CD4-positive, alpha-beta T cell (primary cell): ENCODE measurements at regions of chr19 and their contacts with region 1.

Region 1: GRCh38 chr19:3762501-3763459 is at the start of gene MRPL54:
- DNase-seq: peak; percentile 98 to 100 (median 99)
- ATAC-seq: peak; percentile 81
- H3K4me3 ChIP-seq: peak within 1 kb of the TSS; percentile 99
- H3K4me3 Mint-ChIP-seq: peak within 1 kb of the TSS; percentile 97
- H3K27ac ChIP-seq: peak within 1 kb of the TSS; percentile 99 to 100
- H3K27ac Mint-ChIP-seq: peak within 1 kb of the TSS; percentile 100
- H3K4me1 ChIP-seq: peaks cover 70% of the 10 kb centered on the region
- H3K4me1 Mint-ChIP-seq: peaks cover 33% of the 10 kb centered on the region
- H3K27me3 ChIP-seq: no peaks in the 10 kb centered on the region
- H3K27me3 Mint-ChIP-seq: no peaks in the 10 kb centered on the region
- CTCF ChIP-seq: no peak
- total RNA-seq, gene MRPL54: 68.9 to 71.1 TPM

Region 2: DNA sequence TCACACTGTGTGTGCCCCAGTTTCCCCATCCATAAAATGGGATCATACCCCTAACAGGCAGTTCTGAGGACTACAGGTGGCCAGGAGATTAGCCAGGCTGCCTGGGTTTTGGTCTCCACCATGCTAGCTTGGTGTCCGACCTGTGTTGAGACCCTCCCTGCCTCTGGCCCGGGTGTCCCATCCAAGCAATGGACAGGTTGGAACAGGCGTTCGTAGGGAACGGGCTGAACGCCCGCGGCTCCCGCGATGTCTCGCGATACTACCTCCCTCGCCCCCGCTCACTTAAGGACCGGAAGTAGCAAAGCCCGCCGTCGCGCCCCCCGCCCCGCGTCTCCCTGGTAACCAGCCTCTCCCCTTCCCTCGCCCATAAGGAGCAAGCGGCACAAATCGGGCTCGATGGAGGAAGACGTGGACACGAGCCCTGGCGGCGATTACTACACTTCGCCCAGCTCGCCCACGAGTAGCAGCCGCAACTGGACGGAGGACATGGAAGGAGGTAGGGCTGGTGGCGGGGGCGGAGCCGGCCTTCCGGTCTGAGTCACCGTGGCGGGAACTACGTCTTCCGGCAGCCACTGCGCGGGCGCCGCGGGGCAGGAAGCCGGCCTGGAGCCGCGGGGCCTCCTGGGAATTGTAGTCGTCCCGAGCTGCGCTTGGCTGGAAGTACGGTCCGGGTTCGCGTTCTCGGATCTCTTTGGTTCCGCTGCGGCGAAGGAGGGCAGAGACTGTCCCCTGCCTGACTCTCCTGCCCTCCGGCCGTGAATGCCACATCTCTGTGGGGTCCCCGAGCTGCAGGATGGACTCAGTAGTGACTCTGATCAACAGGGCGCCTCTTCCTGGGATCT is 327.8 kb before region 1 on chr19:
- CTCF ChIA-PET with region 1: no interaction called
- POLR2A ChIA-PET with region 1: interaction called, 4 read pairs
- intact Hi-C with region 1: loop called in 1 of 2 experiments (anchors 10 kb)
- DNase-seq: peak; percentile 88 to 97 (median 94)
- ATAC-seq: peak; percentile 94
- H3K4me3 ChIP-seq: peak overlapping the region; percentile 79
- H3K4me3 Mint-ChIP-seq: peak overlapping the region; percentile 97
- H3K27ac ChIP-seq: peak overlapping the region; percentile 92 to 94
- H3K27ac Mint-ChIP-seq: peak overlapping the region; percentile 95
- H3K4me1 ChIP-seq: peaks cover 17% of the 10 kb centered on the region
- H3K4me1 Mint-ChIP-seq: peaks cover 17% of the 10 kb centered on the region
- H3K27me3 ChIP-seq: no peaks in the 10 kb centered on the region
- H3K27me3 Mint-ChIP-seq: no peaks in the 10 kb centered on the region
- CTCF ChIP-seq: no peak

Region 3: GRCh38 chr19:3687774-3688706 is 74.7 kb before region 1 on chr19:
- CTCF ChIA-PET with region 1: interaction called, 3 read pairs
- POLR2A ChIA-PET with region 1: interaction called, 43 read pairs
- intact Hi-C with region 1: no loop called
- DNase-seq: peak in 12 of 14 experiments; percentile 18 to 69 (median 54)
- ATAC-seq: peak; percentile 71
- H3K4me3 ChIP-seq: peak overlapping the region; percentile 53
- H3K4me3 Mint-ChIP-seq: peak overlapping the region; percentile 94
- H3K27ac ChIP-seq: peak overlapping the region; percentile 58 to 73
- H3K27ac Mint-ChIP-seq: peak overlapping the region; percentile 91
- H3K4me1 ChIP-seq: peaks cover 34% of the 10 kb centered on the region
- H3K4me1 Mint-ChIP-seq: peaks cover 60% of the 10 kb centered on the region
- H3K27me3 ChIP-seq: no peaks in the 10 kb centered on the region
- H3K27me3 Mint-ChIP-seq: no peaks in the 10 kb centered on the region
- CTCF ChIP-seq: no peak

Region 4: DNA sequence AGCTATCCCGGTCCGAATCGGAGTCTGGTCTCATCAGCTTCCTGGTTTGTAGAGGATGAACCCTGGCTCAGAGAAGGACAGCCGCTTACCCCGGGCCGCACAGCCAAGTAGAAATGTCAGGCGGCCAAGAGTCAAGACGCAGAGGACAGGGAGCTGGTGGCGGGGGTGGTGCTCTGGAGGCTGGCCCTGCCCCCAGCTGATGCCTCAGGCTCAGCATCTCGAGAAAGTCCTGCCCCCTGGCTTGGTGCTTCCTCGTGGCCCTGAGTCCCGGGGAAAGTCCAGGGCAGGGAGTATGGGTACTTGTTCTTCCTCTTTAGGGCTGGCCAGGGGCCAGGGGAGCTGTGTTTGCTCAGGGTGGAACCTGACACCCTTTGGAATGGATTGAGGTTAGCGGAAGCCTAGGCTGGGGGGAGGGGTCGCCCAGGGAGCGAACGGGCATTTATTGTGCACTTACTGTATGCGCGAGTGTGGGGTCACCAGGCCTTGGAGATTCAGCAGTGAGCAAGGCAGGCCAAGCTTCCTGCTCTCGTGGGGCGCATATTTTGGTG is 52.4 kb before region 1 on chr19:
- CTCF ChIA-PET with region 1: no interaction called
- POLR2A ChIA-PET with region 1: no interaction called
- intact Hi-C with region 1: no loop called
- DNase-seq: peak in 2 of 14 experiments; percentile 67 to 77
- ATAC-seq: no peak
- H3K4me3 ChIP-seq: no peak overlapping the region
- H3K4me3 Mint-ChIP-seq: no peak overlapping the region
- H3K27ac ChIP-seq: no peak overlapping the region
- H3K27ac Mint-ChIP-seq: no peak overlapping the region
- H3K4me1 ChIP-seq: peaks cover 8% of the 10 kb centered on the region
- H3K4me1 Mint-ChIP-seq: peaks cover 6% of the 10 kb centered on the region
- H3K27me3 ChIP-seq: peaks cover 0 to 10% of the 10 kb centered on the region in 2 experiments
- H3K27me3 Mint-ChIP-seq: peaks cover 7% of the 10 kb centered on the region
- CTCF ChIP-seq: no peak

Region 5: DNA sequence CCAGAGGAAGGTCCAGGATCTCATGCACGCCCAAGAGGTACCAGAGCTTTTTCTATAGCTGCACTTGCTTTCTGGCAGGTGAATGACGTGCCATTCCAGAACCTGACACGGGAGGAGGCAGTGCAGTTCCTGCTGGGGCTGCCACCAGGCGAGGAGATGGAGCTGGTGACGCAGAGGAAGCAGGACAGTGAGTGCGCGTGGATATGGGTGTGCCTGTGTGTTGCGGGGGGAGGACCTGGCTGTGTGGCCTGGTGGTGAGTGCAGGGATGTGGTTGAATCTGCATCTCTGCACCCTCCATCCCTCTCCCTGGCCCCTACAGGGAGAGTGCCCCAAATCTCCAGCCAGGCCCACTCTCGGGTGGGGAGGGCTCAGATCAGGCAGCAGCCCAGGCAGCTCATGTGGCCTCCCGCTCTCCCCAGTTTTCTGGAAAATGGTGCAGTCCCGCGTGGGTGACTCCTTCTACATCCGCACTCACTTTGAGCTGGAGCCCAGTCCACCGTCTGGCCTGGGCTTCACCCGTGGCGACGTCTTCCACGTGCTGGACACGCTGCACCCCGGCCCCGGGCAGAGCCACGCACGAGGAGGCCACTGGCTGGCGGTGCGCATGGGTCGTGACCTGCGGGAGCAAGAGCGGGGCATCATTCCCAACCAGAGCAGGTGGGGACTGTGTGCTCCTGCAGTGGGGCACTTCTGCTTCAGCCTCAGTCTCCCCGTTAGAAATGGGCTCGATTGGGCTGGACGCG is 24.1 kb before region 1 on chr19:
- CTCF ChIA-PET with region 1: no interaction called
- POLR2A ChIA-PET with region 1: interaction called, 27 read pairs
- intact Hi-C with region 1: no loop called
- DNase-seq: no peak
- ATAC-seq: no peak
- H3K4me3 ChIP-seq: no peak overlapping the region
- H3K4me3 Mint-ChIP-seq: no peak overlapping the region
- H3K27ac ChIP-seq: no peak overlapping the region
- H3K27ac Mint-ChIP-seq: peak overlapping the region; percentile 85
- H3K4me1 ChIP-seq: peaks cover 24% of the 10 kb centered on the region
- H3K4me1 Mint-ChIP-seq: peaks cover 20% of the 10 kb centered on the region
- H3K27me3 ChIP-seq: no peaks in the 10 kb centered on the region
- H3K27me3 Mint-ChIP-seq: no peaks in the 10 kb centered on the region
- CTCF ChIP-seq: no peak

Region 6: GRCh38 chr19:3809881-3810707 is 47.3 kb after region 1 on chr19:
- CTCF ChIA-PET with region 1: interaction called, 9 read pairs
- POLR2A ChIA-PET with region 1: interaction called, 60 read pairs
- intact Hi-C with region 1: loop called in 1 of 2 experiments (anchors 2 kb)
- DNase-seq: no peak
- ATAC-seq: no peak
- H3K4me3 ChIP-seq: no peak overlapping the region
- H3K4me3 Mint-ChIP-seq: no peak overlapping the region
- H3K27ac ChIP-seq: peak overlapping the region in 1 of 2 donors; percentile 13
- H3K27ac Mint-ChIP-seq: peak overlapping the region; percentile 7
- H3K4me1 ChIP-seq: peaks cover 47% of the 10 kb centered on the region
- H3K4me1 Mint-ChIP-seq: peaks cover 31% of the 10 kb centered on the region
- H3K27me3 ChIP-seq: no peaks in the 10 kb centered on the region
- H3K27me3 Mint-ChIP-seq: no peaks in the 10 kb centered on the region
- CTCF ChIP-seq: no peak

Region 7: GRCh38 chr19:4108767-4109625 is 346.2 kb after region 1 on chr19:
- CTCF ChIA-PET with region 1: no interaction called
- POLR2A ChIA-PET with region 1: interaction called, 11 read pairs
- intact Hi-C with region 1: no loop called
- DNase-seq: peak; percentile 39 to 92 (median 76)
- ATAC-seq: peak; percentile 59
- H3K4me3 ChIP-seq: peak overlapping the region; percentile 16
- H3K4me3 Mint-ChIP-seq: peak overlapping the region; percentile 68
- H3K27ac ChIP-seq: peak overlapping the region; percentile 53 to 75
- H3K27ac Mint-ChIP-seq: peak overlapping the region; percentile 96
- H3K4me1 ChIP-seq: peaks cover 75% of the 10 kb centered on the region
- H3K4me1 Mint-ChIP-seq: peaks cover 46% of the 10 kb centered on the region
- H3K27me3 ChIP-seq: no peaks in the 10 kb centered on the region
- H3K27me3 Mint-ChIP-seq: no peaks in the 10 kb centered on the region
- CTCF ChIP-seq: no peak